H1 (cell line): ENCODE measurements at regions of chr16 and their contacts with region 1.

Region 1: DNA sequence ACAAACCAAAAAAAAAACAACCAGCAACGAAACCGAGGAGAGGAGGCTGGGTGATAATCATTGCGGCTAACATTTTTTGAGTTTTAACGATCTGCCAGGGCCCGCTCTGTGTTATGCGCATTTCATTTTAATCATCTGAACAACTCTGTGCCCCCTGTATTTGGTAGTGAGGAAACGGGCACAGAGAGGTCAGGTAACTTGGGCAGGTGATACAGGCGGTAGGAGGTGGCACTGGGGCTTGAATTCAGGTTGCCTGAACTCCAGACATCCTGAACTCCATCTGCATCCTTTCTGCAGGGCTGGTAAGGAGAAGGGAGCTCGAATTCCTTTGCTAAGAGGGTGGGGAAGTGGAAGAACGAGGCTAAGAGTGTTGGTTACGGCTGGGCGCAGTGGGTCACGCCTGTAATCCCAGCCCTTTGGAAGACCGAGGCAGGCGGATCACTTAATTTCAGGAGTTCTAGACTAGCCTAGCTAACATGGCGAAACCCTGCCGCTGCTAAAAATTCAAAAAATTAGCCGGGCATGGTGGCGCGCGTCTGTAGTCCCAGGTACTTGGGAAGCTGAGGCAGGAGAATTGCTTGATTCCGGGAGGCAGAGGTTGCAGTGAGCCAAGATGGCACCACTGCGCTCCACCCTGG is 1.1 kb downstream of the CLUAP1 start:
- DNase-seq: no peak
- H3K4me3 ChIP-seq: peak overlapping the region; percentile 53 to 71 (median 66)
- H3K27ac ChIP-seq: no peak overlapping the region
- H3K4me1 ChIP-seq: peaks cover 0 to 5% (median 0%) of the 10 kb centered on the region in 4 experiments; a peak in 1 of 7 replicates
- H3K27me3 ChIP-seq: no peaks in the 10 kb centered on the region
- CTCF ChIP-seq: no peak
- EP300 ChIP-seq: no peak
- POLR2A ChIP-seq: no peak
- RAD21 ChIP-seq: no peak

Region 2: DNA sequence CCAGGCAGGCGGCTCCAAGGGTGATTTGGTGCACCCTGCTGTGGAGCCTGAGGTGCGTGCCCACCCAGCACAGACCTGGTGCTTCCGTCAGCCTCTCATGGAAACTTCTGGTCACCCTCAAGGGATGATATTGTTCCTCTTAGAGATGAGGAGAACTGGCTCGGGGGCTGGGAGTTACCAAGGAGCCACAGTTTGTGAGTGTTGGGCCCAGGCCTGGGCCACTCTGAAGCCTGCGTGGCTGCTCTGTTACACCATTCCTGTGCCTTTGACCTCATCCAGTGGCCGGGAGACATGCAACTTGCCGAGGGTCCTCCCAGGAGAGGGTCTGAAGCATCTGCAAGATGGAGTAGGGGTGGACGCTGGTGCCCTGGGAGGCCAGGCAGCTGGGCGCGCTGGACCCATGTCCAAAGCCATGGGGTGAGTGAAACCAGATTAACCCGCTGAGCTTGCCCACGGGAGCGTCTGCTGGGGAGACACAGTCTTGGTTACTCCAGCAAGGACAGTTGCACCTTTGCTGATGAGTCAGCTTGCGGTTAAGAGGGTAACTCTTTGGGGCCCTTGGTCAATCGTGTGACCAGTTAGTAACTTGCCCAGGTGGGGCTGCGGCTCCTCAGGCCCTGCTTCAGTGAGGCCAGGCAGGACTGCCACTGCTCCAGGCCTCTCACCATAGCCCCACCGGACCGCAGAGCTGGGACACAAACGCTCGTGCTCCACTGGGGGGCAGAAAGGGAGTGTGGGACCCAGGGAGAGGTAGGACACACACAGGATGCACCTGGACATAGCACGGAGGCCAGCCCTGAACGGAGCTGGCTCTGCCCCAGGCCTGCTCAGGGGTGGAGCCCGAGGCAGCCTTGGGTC is 14.2 kb before region 1 on chr16:
- CTCF ChIA-PET with region 1: interaction called, 27 read pairs
- POLR2A ChIA-PET with region 1: interaction called, 9 read pairs
- DNase-seq: no peak
- H3K4me3 ChIP-seq: no peak overlapping the region
- H3K27ac ChIP-seq: no peak overlapping the region
- H3K4me1 ChIP-seq: no peaks in the 10 kb centered on the region
- H3K27me3 ChIP-seq: no peaks in the 10 kb centered on the region
- CTCF ChIP-seq: peak; percentile 0 to 39 (median 10)
- EP300 ChIP-seq: no peak
- POLR2A ChIP-seq: no peak
- RAD21 ChIP-seq: no peak; a peak in 1 of 4 replicates

Region 3: GRCh38 chr16:3536271-3536731 is 34.4 kb after region 1 on chr16:
- CTCF ChIA-PET with region 1: no interaction called
- POLR2A ChIA-PET with region 1: no interaction called
- DNase-seq: no peak
- H3K4me3 ChIP-seq: no peak overlapping the region
- H3K27ac ChIP-seq: no peak overlapping the region
- H3K4me1 ChIP-seq: no peaks in the 10 kb centered on the region
- H3K27me3 ChIP-seq: no peaks in the 10 kb centered on the region
- CTCF ChIP-seq: no peak
- EP300 ChIP-seq: no peak
- POLR2A ChIP-seq: no peak
- RAD21 ChIP-seq: no peak